ENCODE measurements at regions of chr3 and their contacts with region 1.

Region 1: GRCh38 chr3:31242026-31242960 is 290.4 kb upstream of the STT3B start:
- DNase-seq: no peak
- ATAC-seq: peak; percentile 62
- H3K4me3 ChIP-seq: no peak overlapping the region
- H3K27ac ChIP-seq: peak overlapping the region; percentile 82
- H3K4me1 ChIP-seq: peaks cover 28% of the 10 kb centered on the region
- H3K27me3 ChIP-seq: no peaks in the 10 kb centered on the region
- CTCF ChIP-seq: no peak
- EP300 ChIP-seq: no peak
- POLR2A ChIP-seq: no peak
- RAD21 ChIP-seq: peak; percentile 40; the same call in 1 of the 2 replicates

Region 2: GRCh38 chr3:31213869-31214486 is 28.3 kb before region 1 on chr3:
- CTCF ChIA-PET with region 1: interaction called, 7 read pairs
- POLR2A ChIA-PET with region 1: interaction called, 11 read pairs
- RAD21 ChIA-PET with region 1: interaction called, 381 read pairs
- SMC1A ChIA-PET with region 1: interaction called, 50 read pairs
- in situ Hi-C with region 1: no loop called
- intact Hi-C with region 1: loop called (anchors 2 kb)
- DNase-seq: peak; percentile 79
- ATAC-seq: peak; percentile 77
- H3K4me3 ChIP-seq: peak overlapping the region; percentile 40; the same call in 1 of the 2 replicates
- H3K27ac ChIP-seq: peak overlapping the region; percentile 67
- H3K4me1 ChIP-seq: peaks cover 31% of the 10 kb centered on the region
- H3K27me3 ChIP-seq: no peaks in the 10 kb centered on the region
- CTCF ChIP-seq: no peak
- EP300 ChIP-seq: peak; percentile 25 to 67; a peak in 2 of 4 replicates
- POLR2A ChIP-seq: no peak
- RAD21 ChIP-seq: no peak

Region 3: GRCh38 chr3:31219131-31219843 is 23.0 kb before region 1 on chr3:
- CTCF ChIA-PET with region 1: interaction called, 7 read pairs
- POLR2A ChIA-PET with region 1: interaction called, 109 read pairs
- RAD21 ChIA-PET with region 1: interaction called, 381 read pairs
- SMC1A ChIA-PET with region 1: interaction called, 378 read pairs
- in situ Hi-C with region 1: no loop called
- intact Hi-C with region 1: loop called (anchors 2 kb)
- DNase-seq: peak; percentile 84
- ATAC-seq: peak; percentile 84
- H3K4me3 ChIP-seq: no peak overlapping the region
- H3K27ac ChIP-seq: peak overlapping the region; percentile 51
- H3K4me1 ChIP-seq: peaks cover 28% of the 10 kb centered on the region
- H3K27me3 ChIP-seq: no peaks in the 10 kb centered on the region
- CTCF ChIP-seq: no peak
- EP300 ChIP-seq: peak; percentile 57 to 86; a peak in 3 of 4 replicates
- POLR2A ChIP-seq: no peak
- RAD21 ChIP-seq: peak; percentile 30

Region 4: DNA sequence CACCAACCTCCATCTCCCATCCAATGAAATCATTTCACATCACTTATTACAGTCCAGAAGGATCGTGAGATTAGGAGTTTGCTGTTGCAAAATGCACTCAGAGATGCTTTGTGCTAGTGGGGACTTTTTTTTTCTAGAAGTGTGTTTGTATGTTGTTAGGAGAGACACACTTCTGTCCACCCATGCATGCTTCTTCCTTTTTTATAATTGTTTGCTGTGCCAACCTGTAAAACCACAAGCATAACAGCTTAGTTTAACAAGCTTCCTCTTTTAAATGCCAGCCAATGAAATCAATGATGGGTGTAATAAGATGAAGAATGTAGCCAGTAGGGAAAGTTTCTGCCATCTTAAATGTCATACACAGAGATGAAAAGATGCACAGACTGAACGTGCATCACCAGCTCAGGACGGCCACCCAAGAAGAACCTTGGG is 15.1 kb before region 1 on chr3:
- CTCF ChIA-PET with region 1: interaction called, 24 read pairs
- POLR2A ChIA-PET with region 1: interaction called, 109 read pairs
- RAD21 ChIA-PET with region 1: interaction called, 381 read pairs
- SMC1A ChIA-PET with region 1: interaction called, 378 read pairs
- in situ Hi-C with region 1: no loop called
- intact Hi-C with region 1: loop called (anchors 2 kb)
- DNase-seq: peak; percentile 80
- ATAC-seq: peak; percentile 80
- H3K4me3 ChIP-seq: no peak overlapping the region
- H3K27ac ChIP-seq: peak overlapping the region; percentile 44
- H3K4me1 ChIP-seq: peaks cover 45% of the 10 kb centered on the region
- H3K27me3 ChIP-seq: no peaks in the 10 kb centered on the region
- CTCF ChIP-seq: no peak
- EP300 ChIP-seq: peak in 1 of 2 experiments; percentile 75; a peak in 2 of 4 replicates
- POLR2A ChIP-seq: no peak
- RAD21 ChIP-seq: no peak

Region 5: DNA sequence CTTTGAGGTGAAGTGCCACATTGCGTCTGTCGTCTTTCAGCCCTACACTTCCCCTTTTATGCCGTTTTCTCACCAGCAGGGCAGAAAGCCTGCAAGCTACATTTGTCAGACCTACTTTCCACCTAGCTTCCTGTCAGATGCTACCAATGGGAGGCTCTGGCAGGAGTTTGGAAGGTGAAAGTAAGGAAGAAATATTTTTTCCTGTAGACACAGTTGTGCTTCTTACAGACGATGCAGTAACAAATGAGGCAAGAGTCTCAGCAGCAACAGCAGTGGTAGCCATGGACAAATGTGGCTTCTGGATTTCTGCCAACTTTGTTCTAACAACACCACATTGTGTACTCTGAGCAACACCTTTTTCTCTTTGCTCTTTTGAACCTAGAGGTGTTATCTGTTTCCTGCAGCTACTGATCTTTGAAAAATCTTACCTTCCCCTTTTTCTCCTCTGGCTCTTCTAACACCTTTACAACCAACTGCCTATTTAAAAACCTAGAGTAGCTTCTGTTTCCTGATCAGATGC is 219.8 kb after region 1 on chr3:
- CTCF ChIA-PET with region 1: interaction called, 4 read pairs
- POLR2A ChIA-PET with region 1: no interaction called
- RAD21 ChIA-PET with region 1: interaction called, 16 read pairs
- SMC1A ChIA-PET with region 1: interaction called, 7 read pairs
- in situ Hi-C with region 1: no loop called
- intact Hi-C with region 1: no loop called
- DNase-seq: peak; percentile 64
- ATAC-seq: peak; percentile 97
- H3K4me3 ChIP-seq: peak overlapping the region; percentile 7; the same call in 1 of the 2 replicates
- H3K27ac ChIP-seq: peak overlapping the region; percentile 9
- H3K4me1 ChIP-seq: peaks cover 13% of the 10 kb centered on the region
- H3K27me3 ChIP-seq: no peaks in the 10 kb centered on the region
- CTCF ChIP-seq: peak; percentile 4 to 40 (median 37); a peak in 3 of 6 replicates
- EP300 ChIP-seq: 0 out of 4 replicates have a peak, but pooled peaks have one; percentile 23 to 33
- POLR2A ChIP-seq: no peak
- RAD21 ChIP-seq: peak; percentile 35